Esophagus squamous epithelium (tissue), 5 donors: ENCODE measurements at regions of chr13 and their contacts with region 1.

Region 1: DNA sequence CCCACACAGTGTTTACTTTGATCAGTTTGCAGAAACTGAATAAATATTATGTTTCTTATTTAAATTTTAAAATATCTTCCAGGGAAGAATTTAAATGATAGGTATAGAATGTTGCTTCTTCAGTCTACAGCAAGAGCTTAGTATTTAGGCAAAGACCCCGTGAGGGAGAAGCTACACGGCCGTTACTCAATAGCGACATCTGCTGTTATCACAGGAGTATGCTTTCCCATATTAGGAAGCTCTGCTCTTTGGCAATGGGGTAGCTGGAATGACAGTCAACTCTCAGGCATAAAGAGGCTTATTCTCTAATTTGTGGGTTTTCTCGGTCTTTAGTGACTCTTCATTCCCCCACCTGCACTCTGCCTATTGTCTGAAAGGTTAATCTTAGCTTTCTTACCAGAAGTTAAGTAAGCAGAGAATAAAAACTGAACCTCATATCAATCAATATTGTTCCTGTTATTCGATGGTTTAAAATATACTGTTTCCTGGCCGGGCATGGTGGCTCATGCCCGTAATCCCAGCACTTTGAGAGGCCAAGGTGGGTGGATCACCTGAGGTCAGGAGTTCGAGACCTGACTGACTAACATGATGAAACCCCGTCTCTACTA is 13.2 kb upstream of the LHFPL6 start:
- DNase-seq: no peak
- H3K4me3 ChIP-seq: no peak overlapping the region
- H3K27ac ChIP-seq: no peak overlapping the region
- H3K4me1 ChIP-seq: peaks cover 0 to 5% (median 0%) of the 10 kb centered on the region in 3 donors
- H3K27me3 ChIP-seq: no peaks in the 10 kb centered on the region
- CTCF ChIP-seq: peak; percentile 51 to 81 (median 70)
- POLR2A ChIP-seq: no peak

Region 2: GRCh38 chr13:39016787-39017186 is 599.4 kb before region 1 on chr13:
- intact Hi-C with region 1: no loop called
- DNase-seq: no peak
- H3K4me3 ChIP-seq: no peak overlapping the region
- H3K27ac ChIP-seq: no peak overlapping the region
- H3K4me1 ChIP-seq: no peaks in the 10 kb centered on the region
- H3K27me3 ChIP-seq: no peaks in the 10 kb centered on the region
- CTCF ChIP-seq: peak in 3 of 6 experiments; percentile 19 to 44 (median 28)
- POLR2A ChIP-seq: no peak

Region 3: DNA sequence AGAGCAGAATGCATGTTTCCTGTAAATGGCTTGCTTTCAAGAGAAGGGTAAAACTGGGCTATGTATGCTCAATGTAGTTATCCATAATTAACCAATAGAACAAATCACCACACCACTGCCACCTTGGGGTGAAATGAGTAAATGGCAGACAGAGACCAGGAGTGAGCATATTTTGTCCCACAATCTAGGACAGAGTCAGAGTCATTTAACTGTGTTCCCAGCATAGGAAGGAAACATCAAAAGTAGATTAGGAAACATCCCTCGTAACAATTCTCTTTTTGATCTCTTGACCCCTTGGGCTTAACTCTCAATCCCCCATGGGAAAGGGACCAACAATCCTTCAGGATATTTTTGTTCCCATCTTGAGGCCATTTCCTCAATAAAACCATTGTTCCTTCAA is 353.2 kb before region 1 on chr13:
- intact Hi-C with region 1: loop called (anchors 10 kb)
- DNase-seq: no peak
- H3K4me3 ChIP-seq: no peak overlapping the region
- H3K27ac ChIP-seq: peak overlapping the region in 1 of 4 donors; percentile 13
- H3K4me1 ChIP-seq: peaks cover 0 to 6% (median 0%) of the 10 kb centered on the region in 3 donors
- H3K27me3 ChIP-seq: no peaks in the 10 kb centered on the region
- CTCF ChIP-seq: peak; percentile 11 to 65 (median 54)
- POLR2A ChIP-seq: no peak